Activated B cell treated with CpG ODN at 0.5 μM for 24 hours (primary cell): ENCODE measurements at regions of chr12 and their contacts with region 1.

Region 1: GRCh38 chr12:104520242-104520900 is 63.6 kb downstream of the CHST11 start:
- DNase-seq: peak; percentile 53
- ATAC-seq: peak; percentile 83
- H3K4me3 Mint-ChIP-seq: peak overlapping the region; percentile 75
- H3K27ac Mint-ChIP-seq: peak overlapping the region; percentile 79
- H3K4me1 Mint-ChIP-seq: peaks cover 97% of the 10 kb centered on the region
- H3K27me3 Mint-ChIP-seq: no peaks in the 10 kb centered on the region
- CTCF ChIP-seq: no peak

Region 2: GRCh38 chr12:103348935-103349334 is 1171.4 kb before region 1 on chr12:
- CTCF ChIA-PET with region 1: no interaction called
- POLR2A ChIA-PET with region 1: no interaction called
- intact Hi-C with region 1: no loop called
- DNase-seq: no peak
- ATAC-seq: no peak
- H3K4me3 Mint-ChIP-seq: no peak overlapping the region
- H3K27ac Mint-ChIP-seq: peak overlapping the region; percentile 8
- H3K4me1 Mint-ChIP-seq: peaks cover 17% of the 10 kb centered on the region
- H3K27me3 Mint-ChIP-seq: no peaks in the 10 kb centered on the region
- CTCF ChIP-seq: no peak

Region 3: GRCh38 chr12:103956516-103957027 is 563.8 kb before region 1 on chr12:
- CTCF ChIA-PET with region 1: no interaction called
- POLR2A ChIA-PET with region 1: no interaction called
- intact Hi-C with region 1: no loop called
- DNase-seq: no peak
- ATAC-seq: no peak
- H3K4me3 Mint-ChIP-seq: peak overlapping the region; percentile 99
- H3K27ac Mint-ChIP-seq: peak overlapping the region; percentile 97
- H3K4me1 Mint-ChIP-seq: peaks cover 27% of the 10 kb centered on the region
- H3K27me3 Mint-ChIP-seq: no peaks in the 10 kb centered on the region
- CTCF ChIP-seq: no peak

Region 4: GRCh38 chr12:104462931-104463339 is 57.4 kb before region 1 on chr12:
- CTCF ChIA-PET with region 1: no interaction called
- POLR2A ChIA-PET with region 1: interaction called, 9 read pairs
- intact Hi-C with region 1: loop called (anchors 1 kb)
- DNase-seq: no peak
- ATAC-seq: peak; percentile 61
- H3K4me3 Mint-ChIP-seq: peak overlapping the region; percentile 67
- H3K27ac Mint-ChIP-seq: peak overlapping the region; percentile 91
- H3K4me1 Mint-ChIP-seq: peaks cover 88% of the 10 kb centered on the region
- H3K27me3 Mint-ChIP-seq: no peaks in the 10 kb centered on the region
- CTCF ChIP-seq: no peak

Region 5: DNA sequence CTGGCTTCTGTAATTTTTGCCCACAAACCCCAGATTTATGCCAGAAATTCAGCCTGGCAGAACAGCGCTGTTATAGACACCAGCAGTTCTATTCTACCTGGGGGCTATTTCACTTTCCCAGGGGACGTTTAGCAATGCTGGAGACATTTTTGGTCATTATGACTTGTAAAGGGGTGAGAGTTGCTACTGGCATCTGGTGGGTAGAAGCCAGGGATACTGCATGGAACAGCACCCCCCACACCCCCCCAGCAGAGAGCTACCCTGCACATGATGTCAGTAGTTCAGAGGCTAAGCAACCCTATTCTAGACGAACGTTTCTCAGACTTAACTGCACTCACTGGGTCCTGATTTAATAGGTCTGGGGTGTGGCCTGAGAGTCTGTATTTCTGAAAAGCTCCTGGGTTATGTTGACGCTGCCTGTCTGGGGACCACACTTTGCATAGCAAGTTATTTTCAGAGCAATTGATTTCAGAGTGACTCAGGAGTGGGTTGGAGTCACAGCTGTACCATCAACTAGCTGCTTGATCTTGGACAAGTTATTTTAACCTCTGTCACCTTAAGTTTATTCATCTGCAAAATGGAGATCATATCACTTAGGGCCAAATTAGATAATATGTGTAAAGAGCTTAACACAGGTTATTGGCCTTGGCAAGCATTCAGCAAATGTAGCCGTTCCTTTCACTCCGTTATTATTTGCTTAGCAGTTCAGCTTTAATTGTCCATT is 15.1 kb before region 1 on chr12:
- CTCF ChIA-PET with region 1: interaction called, 3 read pairs
- POLR2A ChIA-PET with region 1: interaction called, 7 read pairs
- intact Hi-C with region 1: loop called (anchors 1 kb)
- DNase-seq: no peak
- ATAC-seq: peak; percentile 90
- H3K4me3 Mint-ChIP-seq: peak overlapping the region; percentile 21
- H3K27ac Mint-ChIP-seq: no peak overlapping the region
- H3K4me1 Mint-ChIP-seq: peaks cover 96% of the 10 kb centered on the region
- H3K27me3 Mint-ChIP-seq: no peaks in the 10 kb centered on the region
- CTCF ChIP-seq: no peak

Region 6: DNA sequence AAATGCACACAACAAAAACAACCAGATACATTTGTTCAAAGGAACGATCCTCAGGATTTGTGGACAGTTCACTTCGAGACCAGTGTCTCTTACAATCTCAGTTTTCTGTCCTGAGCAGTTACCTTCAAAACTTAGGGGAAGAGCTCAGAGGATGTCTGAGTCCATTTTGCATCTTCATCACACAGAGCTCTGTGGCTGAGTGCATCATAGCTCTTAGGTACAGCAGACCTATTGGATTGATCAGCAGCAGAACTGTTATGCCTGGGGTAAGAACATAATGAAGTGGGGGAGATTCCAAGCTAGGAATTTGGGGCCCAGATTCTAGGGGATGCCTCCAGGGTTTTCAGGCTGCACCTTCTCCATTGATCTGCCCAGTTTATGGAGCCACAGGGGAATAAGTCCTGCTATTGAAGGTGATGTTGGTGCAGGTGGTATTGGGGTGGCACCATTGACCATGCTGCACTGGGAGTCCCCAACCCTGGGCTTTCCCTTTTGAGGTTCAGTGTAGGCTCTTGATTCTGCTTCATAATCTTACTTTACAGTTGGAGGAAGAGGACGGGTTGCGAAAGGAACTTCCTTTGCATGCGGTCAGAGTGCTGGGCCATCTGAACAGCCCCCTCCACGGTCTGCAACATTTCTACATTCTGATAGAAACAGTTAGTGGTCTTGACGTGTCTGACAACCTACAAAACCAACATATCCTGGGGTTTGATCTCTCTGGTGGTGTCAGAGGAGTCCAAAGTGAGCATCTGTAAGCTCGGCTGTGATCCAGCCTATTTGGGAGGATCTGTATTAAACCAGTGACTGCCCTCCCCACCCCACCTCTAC is 49.2 kb after region 1 on chr12:
- CTCF ChIA-PET with region 1: interaction called, 3 read pairs
- POLR2A ChIA-PET with region 1: interaction called, 5 read pairs
- intact Hi-C with region 1: loop called (anchors 1 kb)
- DNase-seq: peak; percentile 37
- ATAC-seq: peak; percentile 75
- H3K4me3 Mint-ChIP-seq: peak overlapping the region; percentile 55
- H3K27ac Mint-ChIP-seq: peak overlapping the region; percentile 82
- H3K4me1 Mint-ChIP-seq: peaks cover 73% of the 10 kb centered on the region
- H3K27me3 Mint-ChIP-seq: no peaks in the 10 kb centered on the region
- CTCF ChIP-seq: no peak

Region 7: GRCh38 chr12:104834607-104835006 is 314.2 kb after region 1 on chr12:
- CTCF ChIA-PET with region 1: no interaction called
- POLR2A ChIA-PET with region 1: interaction called, 13 read pairs
- intact Hi-C with region 1: no loop called
- DNase-seq: no peak
- ATAC-seq: no peak
- H3K4me3 Mint-ChIP-seq: no peak overlapping the region
- H3K27ac Mint-ChIP-seq: no peak overlapping the region
- H3K4me1 Mint-ChIP-seq: no peaks in the 10 kb centered on the region
- H3K27me3 Mint-ChIP-seq: no peaks in the 10 kb centered on the region
- CTCF ChIP-seq: no peak